ENCODE measurements at regions of chr21 and their contacts with region 1.

Region 1: DNA sequence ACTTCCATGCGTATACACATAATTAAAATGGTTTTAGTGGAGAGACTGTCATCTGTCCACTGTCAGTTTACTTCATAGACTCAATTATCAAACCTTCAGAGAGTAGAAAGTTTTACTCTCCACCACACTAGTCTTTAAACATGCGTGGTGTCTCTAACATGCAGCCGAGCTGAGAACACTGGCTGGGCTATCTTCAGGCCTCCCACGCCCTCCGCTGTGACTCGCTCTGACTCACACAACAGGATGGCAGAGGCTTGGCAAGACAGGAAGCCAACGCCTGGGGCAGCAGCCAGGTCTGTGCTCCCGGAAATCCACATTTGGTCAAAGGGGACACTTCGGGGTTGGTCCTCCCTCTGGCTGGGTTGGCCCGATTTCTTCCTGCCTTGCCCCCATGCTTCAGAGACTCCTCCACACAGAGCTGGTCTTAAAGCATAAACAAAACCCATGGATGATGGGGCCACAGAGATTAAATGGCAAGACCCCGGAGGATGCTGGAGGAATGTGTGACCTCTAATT is 22.7 kb upstream of the IFNGR2 start:
- DNase-seq: peak; percentile 71
- H3K4me3 Mint-ChIP-seq: peak overlapping the region; percentile 11
- H3K27ac Mint-ChIP-seq: peak overlapping the region; percentile 86
- H3K4me1 Mint-ChIP-seq: peaks cover 53% of the 10 kb centered on the region
- H3K27me3 Mint-ChIP-seq: peaks cover 12% of the 10 kb centered on the region

Region 2: DNA sequence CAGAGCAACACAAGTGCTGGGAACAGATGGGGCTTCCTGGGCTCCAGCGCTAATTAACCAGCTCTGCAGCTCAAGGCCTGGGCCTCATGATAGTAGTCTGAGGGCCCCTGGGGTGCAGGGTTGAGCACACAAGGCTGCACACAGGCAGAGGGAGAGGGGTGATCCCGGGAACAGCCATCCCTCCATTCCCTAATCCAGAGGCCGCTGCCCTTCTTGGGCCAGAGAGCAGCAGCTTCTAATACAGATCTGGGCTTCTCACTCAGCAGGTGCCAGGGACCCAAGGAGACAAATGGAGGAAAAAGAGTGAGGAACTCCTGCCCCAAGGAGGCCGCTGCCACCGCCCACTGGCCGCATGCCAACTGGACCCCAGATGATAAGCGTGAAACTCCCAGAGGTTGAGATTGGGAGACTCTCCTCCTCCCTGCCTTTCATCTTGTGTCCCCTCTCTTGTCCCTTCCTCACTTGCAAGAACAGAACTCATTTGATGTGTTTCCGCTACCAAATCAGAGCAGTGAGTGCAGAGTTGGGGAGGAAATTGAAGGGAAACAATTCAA is 208.8 kb before region 1 on chr21:
- intact Hi-C with region 1: no loop called
- DNase-seq: no peak
- H3K4me3 Mint-ChIP-seq: no peak overlapping the region
- H3K27ac Mint-ChIP-seq: no peak overlapping the region
- H3K4me1 Mint-ChIP-seq: no peaks in the 10 kb centered on the region
- H3K27me3 Mint-ChIP-seq: peaks cover 26% of the 10 kb centered on the region

Region 3: DNA sequence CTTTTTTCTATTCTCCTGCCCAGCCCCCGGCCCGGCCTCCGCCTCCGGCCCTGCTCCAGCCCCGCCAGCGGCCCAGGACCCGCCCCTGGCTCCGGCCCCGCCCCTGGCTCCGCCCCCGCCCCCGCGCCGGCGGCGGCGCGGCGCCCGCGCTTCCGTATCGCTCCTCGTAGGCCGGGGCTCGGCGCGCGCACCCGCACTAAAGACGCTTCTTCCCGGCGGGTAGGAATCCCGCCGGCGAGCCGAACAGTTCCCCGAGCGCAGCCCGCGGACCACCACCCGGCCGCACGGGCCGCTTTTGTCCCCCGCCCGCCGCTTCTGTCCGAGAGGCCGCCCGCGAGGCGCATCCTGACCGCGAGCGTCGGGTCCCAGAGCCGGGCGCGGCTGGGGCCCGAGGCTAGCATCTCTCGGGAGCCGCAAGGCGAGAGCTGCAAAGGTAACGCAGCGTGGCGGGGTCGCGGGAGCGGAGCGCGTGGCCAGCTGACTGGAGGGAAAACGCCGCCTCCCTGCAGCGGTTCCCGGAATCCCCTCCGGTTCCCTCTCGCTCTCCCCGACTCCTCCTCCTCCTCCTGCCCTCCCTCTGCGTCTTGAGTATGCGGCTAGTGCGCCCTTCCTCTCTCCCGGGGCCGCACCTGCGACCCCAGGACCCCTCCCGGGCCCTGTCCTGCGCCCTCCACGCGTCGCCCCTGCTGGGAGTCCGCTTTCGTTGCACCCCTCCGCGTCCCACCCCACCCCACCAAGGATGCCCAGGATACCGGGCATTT is 150.6 kb before region 1 on chr21 and contains the start of gene IFNAR2:
- intact Hi-C with region 1: loop called (anchors 1 kb)
- DNase-seq: peak; percentile 71
- H3K4me3 Mint-ChIP-seq: peak within 1 kb of the TSS; percentile 86
- H3K27ac Mint-ChIP-seq: peak within 1 kb of the TSS; percentile 74
- H3K4me1 Mint-ChIP-seq: peaks cover 44% of the 10 kb centered on the region
- H3K27me3 Mint-ChIP-seq: no peaks in the 10 kb centered on the region
- total RNA-seq, gene IFNAR2: 34.8 and 36.8 TPM in 2 replicates

Region 4: DNA sequence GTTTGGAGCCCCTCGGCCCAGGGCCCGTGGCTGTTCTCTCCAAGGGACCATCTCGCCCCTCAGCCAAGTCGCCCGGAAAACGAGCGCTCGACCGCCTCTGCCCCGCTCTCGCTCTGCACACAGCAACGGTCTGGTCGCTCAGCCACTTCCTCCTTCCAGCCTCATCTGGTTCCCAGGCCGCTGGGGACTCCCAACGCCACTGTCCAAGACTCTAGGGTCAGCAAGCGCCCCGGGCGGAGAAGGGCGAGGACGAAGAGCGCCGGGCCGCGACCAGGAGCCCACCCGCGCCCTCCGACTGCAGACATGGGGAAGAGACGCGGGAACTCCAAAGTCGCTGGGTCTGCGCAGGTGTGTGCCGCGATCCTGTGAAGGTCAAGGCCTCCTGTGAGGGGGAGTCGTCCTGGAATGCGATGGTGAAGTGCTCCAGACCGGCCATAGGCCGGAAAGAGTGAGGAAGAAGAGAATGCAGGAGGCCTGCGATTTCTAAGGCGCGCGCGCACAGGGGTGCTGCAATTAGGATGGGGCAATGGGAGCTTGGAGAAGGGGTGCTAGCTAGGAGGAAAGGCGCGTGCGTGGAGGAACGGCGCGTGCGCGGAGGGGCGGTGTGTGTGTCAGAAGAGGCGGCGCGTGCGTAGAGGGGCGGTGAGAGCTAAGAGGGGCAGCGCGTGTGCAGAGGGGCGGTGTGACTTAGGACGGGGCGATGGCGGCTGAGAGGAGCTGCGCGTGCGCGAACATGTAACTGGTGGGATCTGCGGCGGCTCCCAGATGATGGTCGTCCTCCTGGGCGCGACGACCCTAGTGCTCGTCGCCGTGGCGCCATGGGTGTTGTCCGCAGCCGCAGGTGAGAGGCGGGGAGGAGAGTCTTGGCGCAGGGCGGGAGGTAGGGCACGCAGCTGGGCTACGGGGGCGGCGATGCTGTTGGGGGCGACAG is 56.0 kb before region 1 on chr21 and contains the start of gene IFNAR1:
- intact Hi-C with region 1: loop called (anchors 2 kb)
- DNase-seq: peak; percentile 98
- H3K4me3 Mint-ChIP-seq: no peak within 1 kb of the TSS
- H3K27ac Mint-ChIP-seq: no peak within 1 kb of the TSS
- H3K4me1 Mint-ChIP-seq: peaks cover 20% of the 10 kb centered on the region
- H3K27me3 Mint-ChIP-seq: peaks cover 7% of the 10 kb centered on the region
- total RNA-seq, gene IFNAR1: 26.8 and 27.9 TPM in 2 replicates

Region 5: GRCh38 chr21:33406493-33406892 is 26.0 kb after region 1 on chr21:
- intact Hi-C with region 1: loop called (anchors 1 kb)
- DNase-seq: no peak
- H3K4me3 Mint-ChIP-seq: peak overlapping the region; percentile 17
- H3K27ac Mint-ChIP-seq: no peak overlapping the region
- H3K4me1 Mint-ChIP-seq: peaks cover 30% of the 10 kb centered on the region
- H3K27me3 Mint-ChIP-seq: peaks cover 6% of the 10 kb centered on the region

Region 6: DNA sequence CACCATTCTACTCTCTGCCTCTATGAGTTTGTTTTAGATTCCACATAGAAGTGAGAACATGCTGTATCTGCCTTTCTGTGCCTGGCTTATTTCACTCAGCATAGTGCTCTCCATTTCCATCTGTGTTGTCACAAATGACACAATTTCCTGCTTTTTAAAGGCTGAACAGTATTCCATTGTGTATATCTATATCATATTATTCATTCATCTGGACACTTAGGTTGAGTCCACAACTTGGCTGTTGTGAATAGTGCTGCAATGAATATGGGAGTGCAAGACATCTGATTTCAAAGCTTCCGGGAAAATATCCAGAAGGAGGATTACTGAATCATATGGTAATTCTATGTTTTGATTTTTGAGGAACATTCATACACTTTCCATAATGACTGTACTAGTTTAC is 228.0 kb after region 1 on chr21:
- intact Hi-C with region 1: loop called (anchors 10 kb)
- DNase-seq: no peak
- H3K4me3 Mint-ChIP-seq: no peak overlapping the region
- H3K27ac Mint-ChIP-seq: no peak overlapping the region
- H3K4me1 Mint-ChIP-seq: no peaks in the 10 kb centered on the region
- H3K27me3 Mint-ChIP-seq: no peaks in the 10 kb centered on the region